Astrocyte of the cerebellum (primary cell): ENCODE measurements at regions of chr14 and their contacts with region 1.

Region 1: DNA sequence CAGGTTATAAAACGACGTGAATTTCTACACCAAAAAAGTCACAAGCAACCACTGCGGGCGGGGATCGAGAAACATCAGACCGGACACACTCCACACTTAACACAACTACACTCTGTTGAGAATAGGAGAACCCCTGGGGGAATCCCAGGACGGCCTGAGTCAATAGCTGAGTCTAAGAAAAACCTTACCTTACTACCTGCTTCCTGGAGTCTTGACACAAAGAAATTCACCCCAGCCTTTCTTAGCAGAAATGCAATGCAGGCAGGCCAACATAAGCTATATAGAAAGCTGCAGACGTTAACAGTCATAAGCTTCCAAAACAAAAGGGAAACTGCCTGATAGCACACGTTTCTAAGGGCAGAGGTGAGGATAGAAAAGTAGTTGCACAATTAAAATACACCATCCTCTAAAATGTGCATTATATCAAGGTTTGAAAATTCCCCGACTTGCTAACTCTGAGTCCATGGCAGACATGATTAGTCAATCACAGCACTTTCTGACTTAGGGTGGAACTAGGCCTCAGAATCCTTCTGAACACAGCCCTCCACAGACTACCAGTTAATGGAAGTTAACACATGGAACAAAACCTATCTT is 68.0 kb downstream of the CCDC88C start:
- DNase-seq: no peak
- H3K4me3 ChIP-seq: no peak overlapping the region
- CTCF ChIP-seq: no peak

Region 2: DNA sequence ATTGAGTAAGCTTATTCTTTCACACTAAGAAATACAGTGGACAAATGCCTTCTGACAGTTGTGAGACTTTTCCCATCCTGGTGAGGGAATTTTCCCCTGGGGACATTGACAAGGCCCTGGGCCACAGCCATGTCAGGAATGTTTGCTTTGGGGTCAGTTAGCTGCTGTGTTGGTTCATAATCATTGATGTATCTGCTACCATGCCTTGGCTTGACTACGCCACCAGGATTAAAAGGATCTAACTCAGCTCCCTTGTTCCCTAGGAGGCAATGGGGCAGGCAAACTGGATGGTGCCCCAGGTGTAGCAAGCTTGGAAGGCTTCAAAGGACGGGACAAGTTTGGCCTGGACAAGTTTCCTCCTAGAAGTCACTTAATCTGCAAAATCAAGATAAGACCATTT is 71.1 kb after region 1 on chr14:
- in situ Hi-C with region 1: loop called (anchors 5 kb)
- DNase-seq: no peak
- H3K4me3 ChIP-seq: no peak overlapping the region
- CTCF ChIP-seq: no peak